Activated B cell treated with CpG ODN at 0.5 μM for 24 hours (primary cell): ENCODE measurements at regions of chr1 and their contacts with region 1.

Region 1: DNA sequence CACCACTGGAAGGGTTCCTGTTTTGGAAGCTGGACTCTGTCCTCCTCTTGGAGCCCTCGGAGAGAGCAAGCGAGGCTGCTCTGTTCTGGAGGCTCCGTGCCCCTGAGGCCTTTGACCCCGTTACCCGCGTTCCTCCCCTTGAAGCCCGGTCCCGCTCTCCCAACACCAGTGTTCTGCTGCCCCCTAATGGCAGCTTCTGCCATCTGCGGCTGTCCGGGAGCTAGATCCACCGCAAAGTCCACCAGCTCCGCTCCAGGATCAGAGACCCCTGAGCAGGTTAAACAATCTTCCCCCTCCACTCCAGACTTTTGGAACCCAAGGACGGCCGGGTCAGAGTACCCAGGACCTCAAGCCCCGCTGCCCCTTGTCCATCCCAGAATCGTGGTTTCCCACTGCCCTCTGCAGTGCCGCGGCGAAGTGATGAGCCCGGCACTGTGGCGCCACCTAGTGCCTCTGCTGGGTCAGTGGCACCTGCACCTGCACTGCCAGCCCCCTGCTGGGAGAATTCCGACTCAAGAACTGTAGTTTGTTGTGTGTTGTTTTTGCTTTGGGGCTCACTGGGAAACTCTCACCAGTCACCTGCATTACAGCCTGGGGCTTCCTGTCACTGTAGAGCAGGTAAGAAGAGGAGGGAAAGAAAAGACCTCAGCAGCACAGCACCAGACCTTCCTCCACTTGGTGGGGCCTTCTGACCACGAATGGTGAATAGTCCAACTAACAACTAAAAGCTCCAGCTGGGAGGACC is 63.5 kb upstream of the NFASC start:
- DNase-seq: peak; percentile 78
- ATAC-seq: peak; percentile 95
- H3K4me3 Mint-ChIP-seq: peak overlapping the region; percentile 93
- H3K27ac Mint-ChIP-seq: no peak overlapping the region
- H3K4me1 Mint-ChIP-seq: peaks cover 18% of the 10 kb centered on the region
- H3K27me3 Mint-ChIP-seq: peaks cover 3% of the 10 kb centered on the region
- CTCF ChIP-seq: peak; percentile 100

Region 2: GRCh38 chr1:204446370-204447111 is 360.6 kb before region 1 on chr1:
- CTCF ChIA-PET with region 1: interaction called, 15 read pairs
- POLR2A ChIA-PET with region 1: no interaction called
- intact Hi-C with region 1: loop called (anchors 2 kb)
- DNase-seq: peak; percentile 70
- ATAC-seq: peak; percentile 90
- H3K4me3 Mint-ChIP-seq: peak overlapping the region; percentile 62
- H3K27ac Mint-ChIP-seq: peak overlapping the region; percentile 82
- H3K4me1 Mint-ChIP-seq: peaks cover 60% of the 10 kb centered on the region
- H3K27me3 Mint-ChIP-seq: no peaks in the 10 kb centered on the region
- CTCF ChIP-seq: no peak

Region 3: DNA sequence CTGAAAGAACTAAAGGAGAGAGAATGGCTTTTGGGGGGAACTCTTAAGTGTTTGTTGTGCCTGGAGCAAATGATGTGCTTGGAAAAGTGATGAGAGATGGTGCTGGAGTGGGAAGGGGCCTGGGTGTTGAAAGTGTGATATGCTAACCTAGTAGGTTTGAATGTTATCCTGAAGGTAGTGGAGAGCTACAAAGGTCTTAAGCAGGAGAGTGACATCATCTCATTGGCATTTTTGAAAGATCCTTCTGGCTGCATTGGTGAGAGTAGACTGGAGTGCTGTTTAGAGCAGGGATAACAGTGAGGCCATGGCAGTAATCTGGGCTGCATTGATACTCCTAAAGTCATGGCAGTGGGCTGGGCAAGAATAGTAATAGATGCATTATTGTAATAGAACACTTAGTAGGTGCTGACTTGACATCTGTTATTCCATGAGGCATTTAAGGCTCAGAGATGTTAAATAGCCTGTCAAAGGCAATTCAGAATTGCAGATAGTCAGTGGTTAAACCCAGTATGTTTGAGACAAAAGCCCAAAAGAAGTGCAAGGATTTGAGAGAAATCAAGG is 246.4 kb before region 1 on chr1:
- CTCF ChIA-PET with region 1: interaction called, 155 read pairs
- POLR2A ChIA-PET with region 1: interaction called, 9 read pairs
- intact Hi-C with region 1: no loop called
- DNase-seq: no peak
- ATAC-seq: no peak
- H3K4me3 Mint-ChIP-seq: no peak overlapping the region
- H3K27ac Mint-ChIP-seq: peak overlapping the region; percentile 13
- H3K4me1 Mint-ChIP-seq: peaks cover 60% of the 10 kb centered on the region
- H3K27me3 Mint-ChIP-seq: no peaks in the 10 kb centered on the region
- CTCF ChIP-seq: no peak

Region 4: DNA sequence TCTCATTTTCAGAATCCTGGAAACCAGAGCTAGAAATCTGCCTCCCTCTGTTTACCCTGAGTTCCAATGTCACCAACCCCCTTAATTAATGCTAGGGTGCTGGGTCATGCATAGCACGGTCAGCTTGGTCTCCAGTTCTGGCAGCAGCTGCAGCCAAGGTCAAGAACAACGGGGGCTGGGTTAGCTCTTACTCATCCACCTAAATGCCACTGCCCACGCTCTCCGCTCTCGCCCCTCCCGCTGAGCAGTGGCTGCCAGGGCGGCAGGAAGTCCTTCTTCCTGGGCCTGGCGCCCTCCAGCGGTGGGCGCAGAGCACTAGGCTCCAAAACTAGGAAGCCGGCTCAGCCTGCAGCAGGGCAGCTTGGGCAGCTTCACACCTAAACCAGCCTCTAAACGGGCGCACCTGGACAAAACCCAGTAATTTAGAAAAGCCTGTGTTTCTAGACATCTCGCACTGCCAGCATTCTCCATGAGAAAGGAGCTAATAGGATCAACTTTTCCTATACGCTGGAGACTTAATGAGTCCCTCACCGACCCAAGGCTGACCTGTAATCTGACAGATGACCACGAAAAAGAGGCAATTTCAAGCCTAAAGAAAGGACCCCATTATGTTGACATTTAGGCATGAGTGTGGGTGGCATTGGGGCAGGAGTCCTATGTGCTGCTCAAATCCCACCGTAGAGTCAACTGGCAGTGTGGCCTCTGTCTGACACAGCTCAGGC is 43.2 kb before region 1 on chr1:
- CTCF ChIA-PET with region 1: interaction called, 20 read pairs
- POLR2A ChIA-PET with region 1: no interaction called
- intact Hi-C with region 1: loop called (anchors 2 kb)
- DNase-seq: peak; percentile 50
- ATAC-seq: peak; percentile 97
- H3K4me3 Mint-ChIP-seq: peak overlapping the region; percentile 3
- H3K27ac Mint-ChIP-seq: no peak overlapping the region
- H3K4me1 Mint-ChIP-seq: peaks cover 6% of the 10 kb centered on the region
- H3K27me3 Mint-ChIP-seq: peaks cover 29% of the 10 kb centered on the region
- CTCF ChIP-seq: peak; percentile 67

Region 5: DNA sequence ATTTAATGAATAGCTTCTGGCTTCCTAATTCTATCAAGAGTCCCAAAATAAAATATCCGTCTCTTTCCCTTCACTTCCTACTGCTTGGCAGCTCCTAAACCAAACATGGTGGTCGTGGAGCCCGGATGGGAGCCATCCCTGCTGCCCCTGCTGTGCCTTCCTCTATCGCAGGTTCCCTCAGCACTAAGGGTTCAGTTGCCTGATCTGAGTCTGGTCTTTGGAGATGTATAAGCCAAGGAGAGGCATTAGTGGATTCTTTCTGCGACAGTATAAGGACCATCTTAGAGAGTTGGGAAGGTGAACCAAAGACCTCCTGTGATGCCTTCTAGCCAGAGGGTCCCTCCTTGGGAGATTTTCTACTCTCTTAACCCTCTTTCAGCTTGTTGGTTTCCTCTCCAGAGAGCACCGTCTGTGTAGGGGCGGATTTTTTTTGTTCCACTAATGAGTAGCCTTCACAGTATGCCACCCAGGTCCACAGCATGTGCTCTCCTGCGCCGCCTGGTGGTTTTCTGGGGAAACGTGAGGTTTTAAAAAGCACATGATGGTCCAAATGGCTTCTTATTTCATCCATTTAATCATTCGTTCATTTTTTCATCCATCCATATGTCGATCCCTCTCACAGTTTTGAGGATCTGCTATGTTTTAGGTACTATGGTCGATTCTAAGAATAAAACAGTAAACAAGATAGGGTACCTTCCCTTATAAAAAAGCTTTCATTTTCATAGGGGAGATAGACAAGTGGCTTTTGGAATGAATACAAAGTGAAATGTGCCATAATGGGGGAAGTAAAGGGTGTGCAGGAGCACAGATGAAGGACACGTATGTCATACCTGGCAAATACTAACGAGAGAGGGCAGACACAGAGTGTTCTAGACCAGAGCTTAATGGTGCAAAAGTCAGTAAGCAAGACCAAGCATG is 134.6 kb after region 1 on chr1:
- CTCF ChIA-PET with region 1: interaction called, 5 read pairs
- POLR2A ChIA-PET with region 1: no interaction called
- intact Hi-C with region 1: loop called (anchors 5 kb)
- DNase-seq: peak; percentile 35
- ATAC-seq: peak; percentile 54
- H3K4me3 Mint-ChIP-seq: no peak overlapping the region
- H3K27ac Mint-ChIP-seq: no peak overlapping the region
- H3K4me1 Mint-ChIP-seq: no peaks in the 10 kb centered on the region
- H3K27me3 Mint-ChIP-seq: peaks cover 5% of the 10 kb centered on the region
- CTCF ChIP-seq: peak; percentile 41

Region 6: DNA sequence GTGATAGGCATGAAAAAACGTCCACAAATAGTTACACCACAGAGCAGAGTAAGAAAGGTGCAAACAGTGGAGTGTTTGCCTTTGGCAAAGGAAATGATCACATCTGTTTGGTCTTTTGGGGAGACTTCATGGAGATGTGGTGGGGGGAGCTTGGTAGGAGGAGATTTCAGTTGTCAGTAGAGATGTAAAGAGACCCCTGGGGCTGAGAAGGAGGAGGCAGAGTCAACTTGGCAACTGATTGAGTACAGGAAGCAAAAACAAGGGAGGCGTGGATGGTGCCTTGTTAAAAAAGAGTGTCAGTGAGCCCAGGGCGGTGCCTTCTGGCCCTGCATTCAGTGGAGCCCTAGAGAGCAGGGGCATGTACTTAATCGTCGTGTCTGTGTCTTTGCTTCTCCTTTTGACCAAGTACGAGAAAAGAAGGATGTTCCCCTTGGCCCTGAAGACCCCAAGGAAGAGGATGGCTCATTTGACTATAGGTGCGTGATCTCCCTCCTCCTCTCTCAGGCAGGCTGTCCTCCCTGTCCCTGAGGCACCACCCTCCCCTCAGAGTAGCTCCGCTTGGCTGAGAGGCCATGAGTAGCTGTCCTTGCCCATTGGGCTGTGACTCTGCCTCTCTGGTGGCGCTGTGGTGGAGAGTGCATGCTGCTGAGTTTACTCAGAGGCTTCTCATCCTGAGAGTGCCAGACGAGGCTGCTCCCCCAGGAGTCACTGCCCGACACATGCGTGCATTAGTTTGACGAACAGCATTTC is 205.5 kb after region 1 on chr1:
- CTCF ChIA-PET with region 1: no interaction called
- POLR2A ChIA-PET with region 1: no interaction called
- intact Hi-C with region 1: no loop called
- DNase-seq: no peak
- ATAC-seq: no peak
- H3K4me3 Mint-ChIP-seq: no peak overlapping the region
- H3K27ac Mint-ChIP-seq: no peak overlapping the region
- H3K4me1 Mint-ChIP-seq: no peaks in the 10 kb centered on the region
- H3K27me3 Mint-ChIP-seq: peaks cover under 1% of the 10 kb centered on the region
- CTCF ChIP-seq: no peak